ENCODE measurements at regions of chr9 and their contacts with region 1.

Region 1: DNA sequence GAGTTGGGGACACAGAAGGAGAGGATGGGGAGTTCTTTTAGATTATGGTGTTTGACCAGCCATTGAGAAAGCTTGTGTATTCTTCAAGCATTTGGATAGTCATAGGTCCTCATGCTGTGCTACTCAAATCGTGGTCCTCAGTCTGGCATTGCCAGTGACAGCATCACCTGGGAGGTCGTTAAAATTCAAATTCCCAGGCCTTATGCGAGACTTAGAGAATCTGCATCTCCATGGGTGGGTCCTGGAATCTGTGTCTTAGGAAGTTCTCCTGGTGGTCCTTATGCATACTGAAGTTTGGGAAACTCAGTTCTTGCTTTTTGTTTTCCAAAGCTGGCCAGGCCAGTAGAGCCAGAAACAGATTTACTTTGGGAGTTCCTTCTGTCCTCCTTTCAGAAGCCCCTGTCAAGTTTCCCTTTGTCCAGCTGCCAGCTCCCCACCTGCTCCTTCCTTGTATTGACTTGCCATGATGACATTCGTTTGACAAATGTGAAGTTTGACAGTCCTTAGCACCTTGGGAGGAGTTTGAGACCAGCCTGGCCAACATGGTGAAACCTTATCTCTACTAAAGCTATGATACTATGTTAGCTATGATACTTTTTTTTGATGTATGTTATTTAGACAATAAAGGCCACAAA is 95.6 kb downstream of the PALM2AKAP2 start:
- DNase-seq: no peak
- H3K4me3 ChIP-seq: no peak overlapping the region
- H3K27ac ChIP-seq: no peak overlapping the region
- H3K4me1 ChIP-seq: no peaks in the 10 kb centered on the region
- H3K27me3 ChIP-seq: no peaks in the 10 kb centered on the region
- CTCF ChIP-seq: no peak

Region 2: GRCh38 chr9:109574068-109574882 is 301.3 kb before region 1 on chr9:
- intact Hi-C with region 1: loop called (anchors 10 kb)
- DNase-seq: no peak
- H3K4me3 ChIP-seq: no peak overlapping the region
- H3K27ac ChIP-seq: no peak overlapping the region
- H3K4me1 ChIP-seq: no peaks in the 10 kb centered on the region
- H3K27me3 ChIP-seq: no peaks in the 10 kb centered on the region
- CTCF ChIP-seq: peak; percentile 70 to 88

Region 3: DNA sequence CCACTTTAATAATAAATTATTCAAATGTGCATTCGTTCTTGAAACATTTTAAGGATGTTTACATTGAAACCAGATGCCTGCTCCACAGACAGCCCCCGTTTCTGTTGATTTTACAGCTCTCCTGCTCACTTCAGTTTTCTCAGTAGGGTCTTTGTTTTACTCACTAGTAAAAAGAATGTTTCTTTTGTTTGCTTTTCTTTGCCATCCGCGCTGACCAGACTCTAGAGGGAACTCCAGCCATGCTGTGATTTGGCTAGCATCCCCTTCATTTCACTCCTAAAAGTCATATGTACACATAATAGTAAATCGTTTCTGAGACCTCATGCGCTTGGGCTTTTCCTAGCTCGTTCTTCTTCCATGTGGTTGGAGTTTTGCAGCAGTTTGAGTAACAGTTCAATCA is 124.4 kb before region 1 on chr9:
- intact Hi-C with region 1: no loop called
- DNase-seq: no peak
- H3K4me3 ChIP-seq: no peak overlapping the region
- H3K27ac ChIP-seq: no peak overlapping the region
- H3K4me1 ChIP-seq: peaks cover 0 to 23% (median 6%) of the 10 kb centered on the region in 4 donors
- H3K27me3 ChIP-seq: no peaks in the 10 kb centered on the region
- CTCF ChIP-seq: no peak

Region 4: GRCh38 chr9:109843641-109844040 is 32.0 kb before region 1 on chr9:
- intact Hi-C with region 1: no loop called
- DNase-seq: peak in 1 of 2 donors; percentile 26
- H3K4me3 ChIP-seq: no peak overlapping the region
- H3K27ac ChIP-seq: no peak overlapping the region
- H3K4me1 ChIP-seq: peaks cover 0 to 12% (median 7%) of the 10 kb centered on the region in 4 donors
- H3K27me3 ChIP-seq: no peaks in the 10 kb centered on the region
- CTCF ChIP-seq: no peak